ENCODE measurements at regions of chr3 and their contacts with region 1.

Region 1: DNA sequence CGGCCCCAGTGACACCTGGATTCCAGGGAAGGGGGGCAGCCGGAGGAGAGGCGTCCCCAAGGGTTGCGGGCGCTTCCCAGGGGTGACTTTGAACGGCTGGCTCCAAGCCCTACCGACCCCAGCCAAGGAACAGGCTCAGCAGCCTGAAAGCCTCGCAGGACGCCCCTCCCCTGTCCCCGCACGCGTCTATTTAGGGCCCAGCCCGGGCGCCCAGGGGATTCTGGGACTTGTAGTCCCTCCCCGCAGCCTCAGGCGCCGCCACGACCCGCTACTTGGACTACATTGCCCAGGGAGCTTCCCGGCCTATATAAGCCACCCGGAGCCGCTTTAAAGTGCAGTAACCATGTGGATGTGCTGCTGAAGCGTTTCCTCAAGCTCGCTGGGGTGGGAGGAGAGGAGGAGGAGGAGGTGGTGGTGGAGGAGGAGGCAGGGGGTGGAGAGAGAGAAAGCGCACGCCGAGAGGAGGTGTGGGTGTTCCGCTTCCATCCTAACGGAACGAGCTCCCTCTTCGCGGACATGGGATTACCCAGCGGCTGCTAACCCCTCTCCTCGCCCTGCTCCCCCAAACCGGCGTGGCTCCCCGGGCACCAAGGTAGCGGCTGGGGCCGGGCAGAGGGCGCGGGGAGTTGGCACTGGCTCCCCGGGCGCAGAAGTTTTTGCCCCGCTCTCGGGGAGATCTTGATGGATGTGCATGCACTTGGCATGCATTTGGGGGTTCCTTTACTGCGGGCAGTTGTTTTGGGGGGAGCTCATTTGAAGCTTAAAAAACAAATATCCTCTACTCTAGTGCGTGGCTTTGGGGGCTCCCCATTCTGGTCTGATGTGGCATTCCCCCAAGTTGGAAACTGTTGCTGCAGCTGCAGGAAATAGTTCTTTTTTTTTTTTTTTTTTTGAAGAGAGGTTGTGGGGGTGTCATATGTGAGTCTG is at the start of gene ITPR1:
- DNase-seq: peak; percentile 97 to 99 (median 98)
- ATAC-seq: peak; percentile 87
- H3K4me3 ChIP-seq: peak within 1 kb of the TSS; percentile 92
- H3K4me3 Mint-ChIP-seq: peak within 1 kb of the TSS; percentile 98
- H3K27ac ChIP-seq: peak within 1 kb of the TSS; percentile 35 to 84
- H3K27ac Mint-ChIP-seq: peak within 1 kb of the TSS; percentile 88
- H3K4me1 ChIP-seq: peaks cover 31% of the 10 kb centered on the region
- H3K4me1 Mint-ChIP-seq: peaks cover 53% of the 10 kb centered on the region
- H3K27me3 ChIP-seq: no peaks in the 10 kb centered on the region
- H3K27me3 Mint-ChIP-seq: no peaks in the 10 kb centered on the region
- CTCF ChIP-seq: no peak
- total RNA-seq, gene ITPR1: 57.6 to 59.9 TPM

Region 2: GRCh38 chr3:2978977-2979732 is 1514.1 kb before region 1 on chr3:
- CTCF ChIA-PET with region 1: no interaction called
- POLR2A ChIA-PET with region 1: no interaction called
- intact Hi-C with region 1: no loop called
- DNase-seq: no peak
- ATAC-seq: no peak
- H3K4me3 ChIP-seq: no peak overlapping the region
- H3K4me3 Mint-ChIP-seq: no peak overlapping the region
- H3K27ac ChIP-seq: no peak overlapping the region
- H3K27ac Mint-ChIP-seq: no peak overlapping the region
- H3K4me1 ChIP-seq: peaks cover 5% of the 10 kb centered on the region
- H3K4me1 Mint-ChIP-seq: no peaks in the 10 kb centered on the region
- H3K27me3 ChIP-seq: peaks cover 0 to 5% of the 10 kb centered on the region in 2 experiments
- H3K27me3 Mint-ChIP-seq: peaks cover 9% of the 10 kb centered on the region
- CTCF ChIP-seq: no peak

Region 3: DNA sequence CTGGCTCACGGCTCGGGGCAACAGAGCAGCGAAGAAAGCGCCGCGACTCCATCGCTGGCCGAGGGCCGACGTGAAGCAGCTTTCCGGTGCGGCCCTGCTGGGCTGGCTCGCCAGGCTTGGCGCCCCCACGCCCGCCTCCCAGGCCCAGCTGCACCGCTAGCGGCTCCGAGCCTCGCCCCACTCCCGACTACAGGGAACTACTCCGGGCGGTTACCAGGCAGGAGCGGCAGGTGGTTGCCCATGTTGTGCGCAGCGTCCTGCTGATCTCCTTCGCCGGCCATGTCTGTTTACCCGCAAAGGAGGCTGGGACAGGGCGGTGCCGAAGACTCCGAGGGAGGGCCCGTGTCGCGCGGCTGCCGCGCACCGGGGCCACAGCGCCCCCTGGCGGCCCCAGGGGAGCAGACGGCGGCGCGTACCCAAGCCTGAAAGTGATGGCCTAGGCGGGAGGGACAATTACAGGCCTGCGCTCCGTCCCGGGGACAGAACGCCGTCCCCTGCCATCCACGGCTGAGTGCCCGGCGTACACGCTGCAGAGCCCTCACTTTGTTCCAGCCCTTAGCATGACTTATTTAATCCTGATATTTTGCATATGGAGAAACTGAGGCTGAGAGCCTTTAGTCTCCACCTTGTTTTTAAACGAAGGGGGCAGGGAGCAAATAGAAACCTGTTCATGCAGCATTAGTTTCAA is 1313.7 kb before region 1 on chr3 and contains the start of gene CRBN:
- CTCF ChIA-PET with region 1: no interaction called
- POLR2A ChIA-PET with region 1: no interaction called
- intact Hi-C with region 1: loop called in 1 of 2 experiments (anchors 10 kb)
- DNase-seq: peak; percentile 78 to 95 (median 86)
- ATAC-seq: peak; percentile 96
- H3K4me3 ChIP-seq: peak within 1 kb of the TSS; percentile 97
- H3K4me3 Mint-ChIP-seq: peak within 1 kb of the TSS; percentile 92
- H3K27ac ChIP-seq: peak within 1 kb of the TSS; percentile 69 to 94
- H3K27ac Mint-ChIP-seq: peak within 1 kb of the TSS; percentile 92
- H3K4me1 ChIP-seq: peaks cover 31% of the 10 kb centered on the region
- H3K4me1 Mint-ChIP-seq: peaks cover 45% of the 10 kb centered on the region
- H3K27me3 ChIP-seq: no peaks in the 10 kb centered on the region
- H3K27me3 Mint-ChIP-seq: no peaks in the 10 kb centered on the region
- CTCF ChIP-seq: peak; percentile 99
- total RNA-seq, gene CRBN: 144 to 148 TPM

Region 4: DNA sequence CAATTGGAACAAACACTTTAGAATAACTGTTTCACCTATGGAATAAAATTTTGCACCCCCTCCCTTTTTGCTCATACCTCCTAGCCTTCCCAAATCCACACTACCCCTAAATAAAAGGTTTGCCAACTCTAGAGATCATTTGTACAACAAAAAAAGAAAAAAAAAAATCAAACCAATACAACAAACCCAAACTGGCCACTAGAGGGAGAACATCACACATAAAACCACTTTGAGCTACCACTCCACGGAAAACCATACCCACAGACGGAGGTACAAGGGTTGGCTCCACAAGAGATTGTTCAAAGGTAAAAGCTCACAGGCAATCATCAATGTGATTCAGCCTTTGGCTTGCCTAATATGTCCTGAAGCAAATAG is 142.5 kb before region 1 on chr3:
- CTCF ChIA-PET with region 1: interaction called, 11 read pairs
- POLR2A ChIA-PET with region 1: interaction called, 11 read pairs
- intact Hi-C with region 1: loop called in 1 of 2 experiments (anchors 10 kb)
- DNase-seq: peak in 13 of 14 experiments; percentile 6 to 86 (median 39)
- ATAC-seq: peak; percentile 94
- H3K4me3 ChIP-seq: peak overlapping the region; percentile 61
- H3K4me3 Mint-ChIP-seq: peak overlapping the region; percentile 64
- H3K27ac ChIP-seq: no peak overlapping the region
- H3K27ac Mint-ChIP-seq: peak overlapping the region; percentile 10
- H3K4me1 ChIP-seq: peaks cover 4% of the 10 kb centered on the region
- H3K4me1 Mint-ChIP-seq: peaks cover 19% of the 10 kb centered on the region
- H3K27me3 ChIP-seq: no peaks in the 10 kb centered on the region
- H3K27me3 Mint-ChIP-seq: no peaks in the 10 kb centered on the region
- CTCF ChIP-seq: peak; percentile 87

Region 5: GRCh38 chr3:4504340-4505261 is 11.3 kb after region 1 on chr3:
- CTCF ChIA-PET with region 1: interaction called, 4 read pairs
- POLR2A ChIA-PET with region 1: interaction called, 87 read pairs
- intact Hi-C with region 1: loop called in 1 of 2 experiments (anchors 1 kb)
- DNase-seq: peak in 9 of 14 experiments; percentile 16 to 82 (median 42)
- ATAC-seq: peak; percentile 85
- H3K4me3 ChIP-seq: peak overlapping the region; percentile 57
- H3K4me3 Mint-ChIP-seq: peak overlapping the region; percentile 57
- H3K27ac ChIP-seq: peak overlapping the region; percentile 64 to 80
- H3K27ac Mint-ChIP-seq: peak overlapping the region; percentile 82
- H3K4me1 ChIP-seq: peaks cover 25% of the 10 kb centered on the region
- H3K4me1 Mint-ChIP-seq: peaks cover 38% of the 10 kb centered on the region
- H3K27me3 ChIP-seq: no peaks in the 10 kb centered on the region
- H3K27me3 Mint-ChIP-seq: no peaks in the 10 kb centered on the region
- CTCF ChIP-seq: no peak

Region 6: DNA sequence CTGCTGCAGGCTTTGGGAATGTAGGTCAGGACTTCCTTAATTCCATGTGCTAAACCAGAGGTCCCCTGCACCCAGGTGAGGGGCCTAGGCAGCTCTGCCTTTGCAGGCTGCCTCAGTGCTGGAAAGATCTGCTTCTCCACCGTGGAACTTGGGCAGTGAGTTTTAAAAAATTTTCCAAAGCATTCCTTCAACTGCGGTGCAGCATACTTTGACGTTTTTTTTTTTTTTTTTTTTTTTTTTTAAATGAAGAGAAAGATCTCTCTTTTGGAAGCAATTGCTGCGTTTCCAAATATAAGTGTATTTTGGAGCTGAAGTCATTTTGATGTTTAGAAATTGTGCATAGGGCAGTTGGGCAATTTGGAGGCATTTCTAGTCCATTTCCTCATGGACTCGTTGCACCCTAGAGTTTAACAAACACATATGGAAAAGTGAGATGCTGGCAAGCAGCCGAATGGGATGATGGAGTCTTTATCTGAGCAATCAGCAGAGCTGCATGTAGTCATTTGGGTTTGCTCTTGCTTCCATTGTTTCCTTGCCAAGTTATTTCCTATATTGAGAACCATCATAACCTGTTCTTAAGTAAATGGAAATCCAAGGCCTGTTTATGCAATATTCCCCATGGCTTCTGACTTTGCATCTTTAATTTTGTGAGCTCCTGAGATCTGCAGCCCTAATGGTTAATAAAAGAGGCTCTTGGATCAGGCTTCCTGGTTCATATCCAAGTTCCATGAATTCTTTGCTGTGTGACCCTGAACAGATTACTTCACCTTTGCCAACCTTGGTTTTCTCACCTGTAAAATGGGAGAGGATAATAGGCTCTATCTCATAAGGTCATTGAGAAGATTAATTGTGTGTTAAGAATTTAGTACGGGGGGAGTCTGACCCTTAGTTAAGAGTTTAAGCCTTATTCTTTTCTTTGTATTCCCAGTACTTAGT is 31.1 kb after region 1 on chr3:
- CTCF ChIA-PET with region 1: interaction called, 20 read pairs
- POLR2A ChIA-PET with region 1: interaction called, 127 read pairs
- intact Hi-C with region 1: loop called in 1 of 2 experiments (anchors 1 kb)
- DNase-seq: no peak
- ATAC-seq: no peak
- H3K4me3 ChIP-seq: no peak overlapping the region
- H3K4me3 Mint-ChIP-seq: no peak overlapping the region
- H3K27ac ChIP-seq: no peak overlapping the region
- H3K27ac Mint-ChIP-seq: no peak overlapping the region
- H3K4me1 ChIP-seq: peaks cover 6% of the 10 kb centered on the region
- H3K4me1 Mint-ChIP-seq: peaks cover 36% of the 10 kb centered on the region
- H3K27me3 ChIP-seq: no peaks in the 10 kb centered on the region
- H3K27me3 Mint-ChIP-seq: no peaks in the 10 kb centered on the region
- CTCF ChIP-seq: no peak

Region 7: GRCh38 chr3:4834403-4834866 is 341.2 kb after region 1 on chr3:
- CTCF ChIA-PET with region 1: no interaction called
- POLR2A ChIA-PET with region 1: no interaction called
- intact Hi-C with region 1: loop called in 1 of 2 experiments (anchors 10 kb)
- DNase-seq: peak; percentile 49 to 91 (median 60)
- ATAC-seq: peak; percentile 35
- H3K4me3 ChIP-seq: no peak overlapping the region
- H3K4me3 Mint-ChIP-seq: peak overlapping the region; percentile 55
- H3K27ac ChIP-seq: peak overlapping the region; percentile 19 to 24
- H3K27ac Mint-ChIP-seq: peak overlapping the region; percentile 92
- H3K4me1 ChIP-seq: peaks cover 75% of the 10 kb centered on the region
- H3K4me1 Mint-ChIP-seq: peaks cover 76% of the 10 kb centered on the region
- H3K27me3 ChIP-seq: no peaks in the 10 kb centered on the region
- H3K27me3 Mint-ChIP-seq: no peaks in the 10 kb centered on the region
- CTCF ChIP-seq: no peak

Region 8: GRCh38 chr3:5187156-5187919 is 694.1 kb after region 1 on chr3 and contains the start of gene EDEM1:
- CTCF ChIA-PET with region 1: no interaction called
- POLR2A ChIA-PET with region 1: interaction called, 5 read pairs
- intact Hi-C with region 1: loop called in 1 of 2 experiments (anchors 5 kb)
- DNase-seq: peak; percentile 77 to 98 (median 94)
- ATAC-seq: peak; percentile 76
- H3K4me3 ChIP-seq: peak within 1 kb of the TSS; percentile 94
- H3K4me3 Mint-ChIP-seq: peak within 1 kb of the TSS; percentile 98
- H3K27ac ChIP-seq: peak within 1 kb of the TSS; percentile 89 to 94
- H3K27ac Mint-ChIP-seq: peak within 1 kb of the TSS; percentile 98
- H3K4me1 ChIP-seq: peaks cover 25% of the 10 kb centered on the region
- H3K4me1 Mint-ChIP-seq: peaks cover 39% of the 10 kb centered on the region
- H3K27me3 ChIP-seq: no peaks in the 10 kb centered on the region
- H3K27me3 Mint-ChIP-seq: no peaks in the 10 kb centered on the region
- CTCF ChIP-seq: no peak
- total RNA-seq, gene EDEM1: 106 to 114 TPM